ENCODE measurements at regions of chr11 and their contacts with region 1.

Region 1: DNA sequence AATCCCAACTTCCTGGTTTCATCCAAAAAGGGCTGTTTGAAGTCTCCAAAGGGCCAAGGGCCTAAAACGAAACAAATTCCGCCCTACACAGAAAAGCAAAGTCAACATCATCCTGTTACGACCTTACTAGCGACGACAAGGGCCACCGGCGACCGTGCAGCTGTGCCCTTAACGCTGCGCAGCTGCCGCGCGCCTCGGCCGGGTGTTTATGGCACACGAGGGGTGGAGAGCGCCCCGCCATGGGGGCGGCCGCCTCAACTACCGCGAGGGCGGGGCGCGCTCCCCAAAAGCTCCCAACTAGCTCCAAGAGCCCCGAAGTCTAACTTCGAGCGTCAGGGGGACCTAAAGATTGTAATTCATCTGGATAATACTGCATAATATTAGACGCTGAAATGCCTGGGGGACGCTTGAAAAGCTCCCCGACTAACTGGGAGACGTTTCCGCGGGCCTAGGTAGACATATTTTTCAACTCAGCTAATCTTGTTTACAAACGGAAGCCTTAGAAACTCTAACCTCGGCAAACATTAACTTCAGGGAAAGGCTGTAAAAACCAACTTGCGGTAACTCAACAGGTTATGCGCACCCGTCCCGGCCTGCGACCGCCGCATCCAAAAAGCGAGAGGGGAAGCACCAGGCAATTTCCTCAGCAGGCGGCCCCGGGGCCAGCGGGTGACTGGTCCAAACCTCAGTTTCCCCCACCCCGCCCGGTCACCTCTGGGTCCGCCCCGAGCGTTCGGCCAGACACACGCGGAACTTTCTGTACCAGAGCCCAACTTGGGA is 694 bp downstream of the TMEM123 start:
- DNase-seq: peak; percentile 81 to 87
- H3K4me3 ChIP-seq: peak overlapping the region; percentile 90
- H3K4me3 Mint-ChIP-seq: peak overlapping the region; percentile 99
- H3K27ac Mint-ChIP-seq: peak overlapping the region; percentile 98
- H3K4me1 ChIP-seq: peaks cover 55% of the 10 kb centered on the region
- H3K4me1 Mint-ChIP-seq: peaks cover 52% of the 10 kb centered on the region
- H3K27me3 ChIP-seq: no peaks in the 10 kb centered on the region
- H3K27me3 Mint-ChIP-seq: no peaks in the 10 kb centered on the region
- CTCF ChIP-seq: peak; percentile 24 to 51

Region 2: GRCh38 chr11:102109896-102110760 is 341.7 kb before region 1 on chr11 and contains the start of gene YAP1:
- CTCF ChIA-PET with region 1: no interaction called
- POLR2A ChIA-PET with region 1: no interaction called
- intact Hi-C with region 1: loop called (anchors 1 kb)
- DNase-seq: peak; percentile 97 to 99
- H3K4me3 ChIP-seq: peak within 1 kb of the TSS; percentile 96
- H3K4me3 Mint-ChIP-seq: peak within 1 kb of the TSS; percentile 91
- H3K27ac Mint-ChIP-seq: peak within 1 kb of the TSS; percentile 98
- H3K4me1 ChIP-seq: peaks cover 20% of the 10 kb centered on the region
- H3K4me1 Mint-ChIP-seq: peaks cover 16% of the 10 kb centered on the region
- H3K27me3 ChIP-seq: no peaks in the 10 kb centered on the region
- H3K27me3 Mint-ChIP-seq: no peaks in the 10 kb centered on the region
- CTCF ChIP-seq: no peak
- total RNA-seq, gene YAP1: 207 and 227 TPM in 2 replicates

Region 3: GRCh38 chr11:102346748-102347461 is 105.0 kb before region 1 on chr11 and contains the start of gene BIRC2:
- CTCF ChIA-PET with region 1: interaction called, 3 read pairs
- POLR2A ChIA-PET with region 1: interaction called, 5 read pairs
- intact Hi-C with region 1: loop called (anchors 2 kb)
- DNase-seq: peak; percentile 96 to 100
- H3K4me3 ChIP-seq: peak within 1 kb of the TSS; percentile 52
- H3K4me3 Mint-ChIP-seq: peak within 1 kb of the TSS; percentile 93
- H3K27ac Mint-ChIP-seq: peak within 1 kb of the TSS; percentile 68
- H3K4me1 ChIP-seq: peaks cover 17% of the 10 kb centered on the region
- H3K4me1 Mint-ChIP-seq: peaks cover 8% of the 10 kb centered on the region
- H3K27me3 ChIP-seq: no peaks in the 10 kb centered on the region
- H3K27me3 Mint-ChIP-seq: no peaks in the 10 kb centered on the region
- CTCF ChIP-seq: peak; percentile 71 to 97
- total RNA-seq, gene BIRC2: 52.7 and 53.5 TPM in 2 replicates

Region 4: DNA sequence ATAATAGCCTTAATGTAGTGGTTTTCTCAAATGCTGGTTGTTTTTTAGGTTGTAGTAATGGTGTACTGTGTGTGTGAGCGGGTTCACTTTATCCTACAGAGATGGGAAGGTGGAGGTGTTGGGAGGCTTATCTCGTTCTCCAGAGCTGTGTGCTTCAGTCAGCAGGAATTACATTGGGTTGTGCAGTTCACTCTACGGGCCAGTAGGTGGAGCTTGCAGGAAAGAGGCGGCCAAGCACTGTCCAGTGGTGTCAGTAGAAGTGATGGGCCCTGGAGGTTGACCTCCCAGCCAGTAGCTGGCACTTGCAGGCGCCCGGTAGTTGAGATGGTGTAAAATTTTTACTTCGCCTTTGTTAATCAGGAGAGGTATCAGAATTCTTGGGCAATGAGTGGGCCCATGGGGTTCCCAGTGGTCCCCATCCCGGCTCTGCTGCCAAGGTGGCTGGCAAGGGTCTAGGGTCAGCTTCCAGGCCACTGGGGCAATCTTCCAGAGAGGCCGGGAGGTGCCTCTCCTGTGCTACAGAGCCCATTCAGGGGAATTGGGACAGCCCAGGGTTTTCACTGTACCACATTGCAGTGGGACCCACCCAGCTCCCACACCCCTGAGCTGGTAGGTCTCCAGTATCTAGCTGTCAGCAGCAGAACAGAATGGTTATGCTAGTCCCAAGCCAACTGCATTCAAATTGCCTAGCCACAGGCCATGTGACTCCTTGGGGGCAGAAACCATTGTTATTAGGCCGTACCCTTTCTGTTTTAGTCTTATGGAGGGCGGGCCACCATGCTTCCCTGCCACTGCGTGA is 61.0 kb before region 1 on chr11:
- CTCF ChIA-PET with region 1: interaction called, 11 read pairs
- POLR2A ChIA-PET with region 1: no interaction called
- intact Hi-C with region 1: loop called (anchors 1 kb)
- DNase-seq: peak; percentile 89
- H3K4me3 ChIP-seq: no peak overlapping the region
- H3K4me3 Mint-ChIP-seq: no peak overlapping the region
- H3K27ac Mint-ChIP-seq: peak overlapping the region; percentile 3
- H3K4me1 ChIP-seq: peaks cover 16% of the 10 kb centered on the region
- H3K4me1 Mint-ChIP-seq: peaks cover 21% of the 10 kb centered on the region
- H3K27me3 ChIP-seq: no peaks in the 10 kb centered on the region
- H3K27me3 Mint-ChIP-seq: no peaks in the 10 kb centered on the region
- CTCF ChIP-seq: peak; percentile 97 to 98

Region 5: GRCh38 chr11:102430158-102430836 is 21.6 kb before region 1 on chr11:
- CTCF ChIA-PET with region 1: interaction called, 8 read pairs
- POLR2A ChIA-PET with region 1: interaction called, 8 read pairs
- intact Hi-C with region 1: loop called (anchors 1 kb)
- DNase-seq: no peak
- H3K4me3 ChIP-seq: no peak overlapping the region
- H3K4me3 Mint-ChIP-seq: no peak overlapping the region
- H3K27ac Mint-ChIP-seq: peak overlapping the region; percentile 28
- H3K4me1 ChIP-seq: peaks cover 41% of the 10 kb centered on the region
- H3K4me1 Mint-ChIP-seq: peaks cover 40% of the 10 kb centered on the region
- H3K27me3 ChIP-seq: no peaks in the 10 kb centered on the region
- H3K27me3 Mint-ChIP-seq: no peaks in the 10 kb centered on the region
- CTCF ChIP-seq: no peak

Region 6: GRCh38 chr11:102462610-102463009 is 10.7 kb after region 1 on chr11:
- CTCF ChIA-PET with region 1: no interaction called
- POLR2A ChIA-PET with region 1: no interaction called
- intact Hi-C with region 1: loop called (anchors 1 kb)
- DNase-seq: peak in 1 of 2 experiments; percentile 29
- H3K4me3 ChIP-seq: no peak overlapping the region
- H3K4me3 Mint-ChIP-seq: no peak overlapping the region
- H3K27ac Mint-ChIP-seq: no peak overlapping the region
- H3K4me1 ChIP-seq: peaks cover 40% of the 10 kb centered on the region
- H3K4me1 Mint-ChIP-seq: peaks cover 28% of the 10 kb centered on the region
- H3K27me3 ChIP-seq: no peaks in the 10 kb centered on the region
- H3K27me3 Mint-ChIP-seq: no peaks in the 10 kb centered on the region
- CTCF ChIP-seq: no peak

Region 7: GRCh38 chr11:102553835-102554282 is 102.0 kb after region 1 on chr11:
- CTCF ChIA-PET with region 1: no interaction called
- POLR2A ChIA-PET with region 1: no interaction called
- intact Hi-C with region 1: loop called (anchors 2 kb)
- DNase-seq: no peak
- H3K4me3 ChIP-seq: no peak overlapping the region
- H3K4me3 Mint-ChIP-seq: no peak overlapping the region
- H3K27ac Mint-ChIP-seq: peak overlapping the region; percentile 87
- H3K4me1 ChIP-seq: peaks cover 36% of the 10 kb centered on the region
- H3K4me1 Mint-ChIP-seq: peaks cover 30% of the 10 kb centered on the region
- H3K27me3 ChIP-seq: no peaks in the 10 kb centered on the region
- H3K27me3 Mint-ChIP-seq: no peaks in the 10 kb centered on the region
- CTCF ChIP-seq: no peak